Activated CD4-positive, alpha-beta T cell treated with anti-CD3 and anti-CD28 coated beads, Interleukin-2, amount 10 ng/mL, durations not matched to agents 24 days and 14 days (primary cell): ENCODE measurements at regions of chr20 and their contacts with region 1.

Region 1: GRCh38 chr20:63739130-63740069 is at the start of gene SLC2A4RG:
- DNase-seq: peak; percentile 93
- H3K4me3 Mint-ChIP-seq: peak within 1 kb of the TSS; percentile 59
- H3K27ac Mint-ChIP-seq: no peak within 1 kb of the TSS
- H3K4me1 Mint-ChIP-seq: peaks cover 15% of the 10 kb centered on the region
- H3K27me3 Mint-ChIP-seq: no peaks in the 10 kb centered on the region
- total RNA-seq, gene SLC2A4RG: 41.0 and 43.6 TPM in 2 replicates

Region 2: GRCh38 chr20:63635431-63636141 is 103.8 kb before region 1 on chr20:
- intact Hi-C with region 1: loop called (anchors 5 kb)
- DNase-seq: peak; percentile 92
- H3K4me3 Mint-ChIP-seq: peak overlapping the region; percentile 68
- H3K27ac Mint-ChIP-seq: peak overlapping the region; percentile 92
- H3K4me1 Mint-ChIP-seq: peaks cover 44% of the 10 kb centered on the region
- H3K27me3 Mint-ChIP-seq: no peaks in the 10 kb centered on the region

Region 3: DNA sequence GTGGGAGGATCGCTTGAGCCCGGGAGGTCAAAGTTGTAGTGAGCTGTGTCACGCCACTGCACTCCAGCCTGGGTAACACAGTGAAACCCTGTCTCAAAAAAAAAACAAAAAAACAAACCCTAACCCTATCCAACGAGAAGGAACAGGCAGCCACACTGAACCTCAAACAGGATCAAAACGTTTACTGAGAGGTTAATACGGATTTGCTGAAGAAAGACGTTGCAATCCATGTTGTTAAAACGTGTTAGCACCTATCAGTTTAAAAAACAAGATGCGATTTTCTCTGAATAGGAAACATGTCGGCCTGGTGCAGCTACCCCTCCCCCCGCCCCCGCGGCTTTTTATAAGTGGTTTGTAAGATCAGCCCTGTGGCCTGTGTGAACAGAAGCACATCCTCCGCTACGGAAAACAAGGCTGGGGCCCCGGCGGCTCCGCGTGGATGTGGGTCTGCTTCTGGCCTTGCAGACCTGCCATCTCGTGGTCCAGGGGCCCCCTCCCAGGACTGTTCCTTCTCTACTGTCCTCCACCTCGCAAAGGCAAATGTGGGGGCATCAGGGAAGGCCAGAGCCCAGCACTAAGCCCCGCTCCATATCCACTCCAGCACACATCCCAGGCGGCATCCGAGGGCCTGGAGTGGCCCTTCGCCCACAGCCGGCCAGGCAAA is 11.5 kb after region 1 on chr20:
- intact Hi-C with region 1: loop called (anchors 1 kb)
- DNase-seq: peak; percentile 88
- H3K4me3 Mint-ChIP-seq: peak overlapping the region; percentile 73
- H3K27ac Mint-ChIP-seq: peak overlapping the region; percentile 88
- H3K4me1 Mint-ChIP-seq: peaks cover 11% of the 10 kb centered on the region
- H3K27me3 Mint-ChIP-seq: peaks cover 1% of the 10 kb centered on the region

Region 4: DNA sequence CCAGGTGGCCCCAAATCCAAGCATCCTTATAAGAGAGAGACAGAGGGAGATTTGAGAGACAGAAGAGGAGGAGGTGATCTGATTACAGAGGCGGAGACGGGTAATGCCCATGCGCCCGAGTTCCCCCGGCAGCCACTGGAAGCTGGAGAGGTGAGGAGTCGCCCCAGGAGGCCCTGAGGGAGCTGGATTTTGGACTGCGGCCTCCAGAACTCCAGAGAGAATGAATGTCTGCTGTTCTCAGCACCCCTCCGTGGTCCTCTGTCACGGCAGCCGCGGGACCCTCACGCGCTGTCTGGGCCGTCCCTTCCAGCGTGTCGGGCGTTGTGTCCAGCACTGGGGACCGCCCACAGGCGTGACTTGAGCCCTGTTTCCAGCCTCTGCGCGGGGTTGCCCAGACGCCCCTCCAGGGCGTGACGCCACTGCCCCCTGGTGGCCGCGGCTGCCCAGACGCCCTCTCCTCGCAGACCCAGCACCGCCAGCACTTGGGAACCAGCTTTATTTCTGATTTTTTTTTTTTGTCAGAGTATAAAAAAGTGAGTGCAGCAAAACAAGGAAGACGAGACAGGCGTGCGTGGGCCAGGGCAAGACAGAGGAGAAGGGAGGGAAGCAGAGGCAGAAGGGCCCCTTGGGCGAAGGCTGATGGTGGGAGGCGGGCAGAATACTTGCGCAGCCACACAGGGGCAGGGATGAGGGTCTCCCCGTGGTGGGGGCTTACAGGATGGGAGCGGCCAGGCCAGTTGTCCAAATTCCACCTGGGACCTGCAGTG is 234.4 kb after region 1 on chr20:
- intact Hi-C with region 1: loop called (anchors 10 kb)
- DNase-seq: peak; percentile 94
- H3K4me3 Mint-ChIP-seq: no peak overlapping the region
- H3K27ac Mint-ChIP-seq: peak overlapping the region; percentile 4
- H3K4me1 Mint-ChIP-seq: peaks cover 44% of the 10 kb centered on the region
- H3K27me3 Mint-ChIP-seq: no peaks in the 10 kb centered on the region